ENCODE measurements at regions of chr15 and their contacts with region 1.

Region 1: GRCh38 chr15:95068701-95069521 is 837.5 kb downstream of the MCTP2 start:
- DNase-seq: no peak
- H3K4me3 ChIP-seq: no peak overlapping the region
- H3K27ac ChIP-seq: no peak overlapping the region
- H3K4me1 ChIP-seq: no peaks in the 10 kb centered on the region
- H3K27me3 ChIP-seq: no peaks in the 10 kb centered on the region
- CTCF ChIP-seq: no peak
- POLR2A ChIP-seq: no peak

Region 2: GRCh38 chr15:95041299-95041698 is 27.6 kb before region 1 on chr15:
- CTCF ChIA-PET with region 1: no interaction called
- POLR2A ChIA-PET with region 1: no interaction called
- dilution Hi-C with region 1: no loop called
- intact Hi-C with region 1: loop called (anchors 2 kb)
- DNase-seq: no peak
- H3K4me3 ChIP-seq: no peak overlapping the region
- H3K27ac ChIP-seq: no peak overlapping the region
- H3K4me1 ChIP-seq: no peaks in the 10 kb centered on the region
- H3K27me3 ChIP-seq: no peaks in the 10 kb centered on the region
- CTCF ChIP-seq: no peak
- POLR2A ChIP-seq: no peak

Region 3: GRCh38 chr15:95284933-95285421 is 216.1 kb after region 1 on chr15:
- CTCF ChIA-PET with region 1: no interaction called
- POLR2A ChIA-PET with region 1: no interaction called
- dilution Hi-C with region 1: no loop called
- intact Hi-C with region 1: no loop called
- DNase-seq: peak; percentile 88
- H3K4me3 ChIP-seq: no peak overlapping the region
- H3K27ac ChIP-seq: peak overlapping the region; percentile 15
- H3K4me1 ChIP-seq: peaks cover 63% of the 10 kb centered on the region
- H3K27me3 ChIP-seq: no peaks in the 10 kb centered on the region
- CTCF ChIP-seq: peak; percentile 21 to 28
- POLR2A ChIP-seq: no peak

Measured in endothelial cell of umbilical vein (primary cell).